ENCODE measurements at regions of chr1 and their contacts with region 1.

Region 1: DNA sequence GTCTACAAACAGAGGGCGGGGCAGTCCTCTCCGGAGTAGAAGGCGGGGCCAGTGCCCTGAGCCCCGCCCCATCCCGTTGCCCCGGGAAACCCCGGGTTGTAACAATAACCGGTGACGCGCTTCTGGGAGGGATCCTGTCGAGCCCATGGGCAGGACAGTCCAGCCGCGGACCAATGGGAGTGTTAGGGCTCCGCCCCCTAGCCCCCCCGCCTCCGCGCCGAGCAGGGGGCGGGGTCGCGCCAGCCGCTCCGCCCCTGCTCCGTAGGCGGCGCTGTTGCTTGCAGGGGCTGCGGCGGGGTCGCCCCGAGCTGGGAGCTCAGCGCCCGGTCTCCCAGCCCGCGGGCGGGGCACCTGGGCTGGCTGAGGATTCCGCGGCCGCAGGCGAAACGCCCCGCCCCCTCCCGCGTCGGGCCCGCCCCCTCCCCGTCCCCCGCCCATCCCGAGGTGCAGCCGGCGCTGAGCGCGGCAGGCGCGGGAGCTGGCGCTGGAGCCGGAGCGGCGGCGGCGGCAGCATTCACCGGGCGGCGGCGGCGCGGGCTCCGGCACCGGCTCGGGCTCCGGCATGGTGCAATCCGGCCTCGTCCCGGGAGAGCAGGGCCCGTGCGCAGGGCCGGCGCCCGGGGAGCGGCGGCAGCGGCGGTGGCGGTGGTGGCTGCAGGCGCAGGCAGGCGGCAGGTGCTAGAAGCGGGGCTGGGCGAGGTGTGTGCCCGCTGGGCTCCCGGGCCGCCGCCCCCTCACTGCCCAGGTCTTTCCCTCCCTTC is at the start of gene FOXO6:
- DNase-seq: peak; percentile 97 to 100
- H3K4me3 ChIP-seq: peak within 1 kb of the TSS; percentile 73 to 87
- H3K27ac ChIP-seq: peak within 1 kb of the TSS; percentile 19 to 58
- H3K4me1 ChIP-seq: peaks cover 12 to 37% of the 10 kb centered on the region in 2 donors
- H3K27me3 ChIP-seq: no peaks in the 10 kb centered on the region
- CTCF ChIP-seq: peak; percentile 16 to 65 (median 45)
- total RNA-seq, gene FOXO6: 5.7 TPM

Region 2: DNA sequence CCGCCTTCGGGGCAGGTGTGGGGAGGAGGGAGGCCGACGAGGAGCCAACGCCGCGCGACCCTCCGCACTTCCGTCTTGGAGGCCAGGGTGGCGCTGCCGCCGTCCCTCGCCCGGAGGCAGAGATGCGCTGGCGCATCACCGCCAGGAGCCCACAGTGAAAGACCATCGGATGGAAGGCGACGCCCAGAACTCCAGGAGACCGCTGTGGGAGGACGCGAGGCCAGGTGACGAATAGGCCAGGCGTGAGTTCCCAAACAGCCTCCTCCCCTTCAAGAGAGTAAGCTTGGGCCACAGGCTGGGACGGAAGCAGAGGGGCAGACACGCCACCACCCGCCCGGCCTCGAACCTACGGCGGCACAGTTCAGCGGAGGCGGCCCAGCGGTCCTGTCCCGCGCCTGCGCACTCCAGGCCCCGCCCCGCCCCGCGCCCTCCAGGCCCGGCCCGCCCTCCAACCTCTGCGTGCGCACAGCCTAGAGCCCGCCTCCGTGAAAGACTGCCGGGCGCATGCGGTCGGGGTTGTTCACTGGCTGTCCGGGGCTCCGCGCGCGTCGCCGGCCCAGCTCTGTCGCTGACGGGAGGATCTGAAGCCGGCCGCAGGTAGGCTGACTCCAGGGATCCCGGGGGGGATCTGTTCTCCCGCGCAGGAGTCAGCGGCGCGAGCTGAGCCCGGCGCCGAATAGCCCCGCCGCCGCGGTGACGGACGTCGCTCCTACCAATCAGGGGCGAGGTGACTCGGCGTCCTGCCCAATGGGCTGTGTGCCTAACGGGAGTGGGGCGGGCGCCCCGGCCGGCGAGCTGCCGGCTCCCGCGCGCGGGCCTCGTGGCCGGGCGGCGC is 381.7 kb before region 1 on chr1 and contains the start of gene CTPS1:
- intact Hi-C with region 1: loop called (anchors 10 kb)
- DNase-seq: peak; percentile 71 to 96
- H3K4me3 ChIP-seq: peak within 1 kb of the TSS; percentile 78 to 83
- H3K27ac ChIP-seq: peak within 1 kb of the TSS; percentile 96 to 98
- H3K4me1 ChIP-seq: peaks cover 7 to 30% of the 10 kb centered on the region in 2 donors
- H3K27me3 ChIP-seq: no peaks in the 10 kb centered on the region
- CTCF ChIP-seq: peak in 1 of 3 experiments; percentile 21
- total RNA-seq, gene CTPS1: 33.0 TPM

Region 3: GRCh38 chr1:41268154-41268770 is 92.9 kb before region 1 on chr1:
- intact Hi-C with region 1: loop called (anchors 5 kb)
- DNase-seq: peak in 1 of 2 donors; percentile 86
- H3K4me3 ChIP-seq: no peak overlapping the region
- H3K27ac ChIP-seq: no peak overlapping the region
- H3K4me1 ChIP-seq: no peaks in the 10 kb centered on the region
- H3K27me3 ChIP-seq: no peaks in the 10 kb centered on the region
- CTCF ChIP-seq: peak; percentile 91 to 98 (median 97)

Region 4: GRCh38 chr1:41381692-41382477 is 20.7 kb after region 1 on chr1:
- intact Hi-C with region 1: loop called (anchors 1 kb)
- DNase-seq: peak in 1 of 2 donors; percentile 81
- H3K4me3 ChIP-seq: peak overlapping the region; percentile 65 to 71
- H3K27ac ChIP-seq: peak overlapping the region; percentile 98
- H3K4me1 ChIP-seq: peaks cover 12 to 16% of the 10 kb centered on the region in 2 donors
- H3K27me3 ChIP-seq: no peaks in the 10 kb centered on the region
- CTCF ChIP-seq: no peak

Region 5: DNA sequence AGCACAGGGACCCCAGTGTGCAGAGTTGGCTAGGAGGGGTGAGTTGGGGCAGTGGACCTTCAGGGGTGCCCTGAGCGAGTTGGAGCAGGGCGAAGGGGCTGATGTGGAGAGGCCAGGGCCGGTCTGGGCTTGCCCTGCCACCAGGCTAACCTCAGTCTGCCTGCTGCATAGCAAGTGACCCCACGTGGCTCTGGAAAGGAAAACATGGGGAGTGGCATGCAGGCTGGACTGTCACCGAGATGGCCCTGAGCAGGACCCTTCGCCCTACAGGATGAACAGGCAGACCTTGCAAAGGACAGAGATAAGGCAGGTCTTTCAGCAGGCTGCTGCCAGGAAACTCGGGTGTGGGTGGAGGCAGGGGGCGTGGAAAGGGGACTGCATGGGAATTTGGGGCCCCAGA is 51.6 kb after region 1 on chr1:
- intact Hi-C with region 1: no loop called
- DNase-seq: no peak
- H3K4me3 ChIP-seq: no peak overlapping the region
- H3K27ac ChIP-seq: no peak overlapping the region
- H3K4me1 ChIP-seq: peaks cover 0 to 2% of the 10 kb centered on the region in 2 donors
- H3K27me3 ChIP-seq: no peaks in the 10 kb centered on the region
- CTCF ChIP-seq: no peak

Region 6: GRCh38 chr1:41496080-41497055 is 135.2 kb after region 1 on chr1:
- intact Hi-C with region 1: loop called (anchors 5 kb)
- DNase-seq: peak; percentile 61 to 95
- H3K4me3 ChIP-seq: peak overlapping the region; percentile 24 to 43
- H3K27ac ChIP-seq: peak overlapping the region; percentile 93 to 97
- H3K4me1 ChIP-seq: peaks cover 27 to 69% of the 10 kb centered on the region in 2 donors
- H3K27me3 ChIP-seq: no peaks in the 10 kb centered on the region
- CTCF ChIP-seq: peak in 2 of 3 experiments; percentile 20 to 37